ENCODE measurements at regions of chr19 and their contacts with region 1.

Region 1: GRCh38 chr19:12666265-12667048 is at the starts of genes MAN2B1 and WDR83:
- DNase-seq: peak; percentile 83
- H3K4me3 ChIP-seq: peak within 1 kb of the TSS; percentile 62 to 79 (median 76)
- H3K27ac ChIP-seq: peak within 1 kb of the TSS; percentile 73 to 82 (median 78)
- H3K4me1 ChIP-seq: peaks cover 0 to 47% (median 43%) of the 10 kb centered on the region in 4 donors
- H3K27me3 ChIP-seq: no peaks in the 10 kb centered on the region
- CTCF ChIP-seq: no peak
- EP300 ChIP-seq: no peak
- POLR2A ChIP-seq: peak in 1 of 2 donors; percentile 17
- total RNA-seq, gene MAN2B1: 41.1 to 75.6 (median 63.8) TPM
- total RNA-seq, gene WDR83: 7.8 to 11.7 (median 10.0) TPM

Region 2: DNA sequence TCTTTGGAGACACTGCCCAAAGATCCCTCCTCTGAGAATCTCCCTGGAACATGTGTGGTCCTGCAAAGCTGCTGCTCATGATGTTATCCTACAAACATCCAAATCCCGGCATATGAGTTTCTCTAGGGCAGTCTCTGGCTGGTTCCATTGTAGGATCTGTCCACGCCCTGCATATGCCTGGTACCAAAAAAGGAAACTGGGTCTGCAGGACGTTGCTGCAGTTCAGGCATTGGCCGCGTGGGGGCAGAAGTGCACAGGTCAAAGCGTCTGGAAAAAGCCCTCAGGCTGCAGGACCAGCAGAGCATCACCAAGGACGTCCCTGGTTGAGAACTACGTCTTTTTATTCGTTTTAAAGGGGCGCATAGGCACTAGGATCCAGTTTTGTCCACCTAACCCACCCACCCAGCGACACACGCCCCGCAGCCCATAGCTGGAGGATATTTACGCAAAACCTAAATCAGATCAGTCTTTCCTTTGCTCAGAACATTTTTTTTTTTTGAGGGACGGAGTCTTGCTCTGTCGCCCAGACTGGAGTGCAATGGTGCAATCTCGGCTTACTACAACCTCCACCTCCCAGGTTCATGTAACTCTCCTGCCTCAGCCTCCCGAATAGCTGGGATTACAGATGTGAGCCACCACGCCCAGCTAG is 102.3 kb before region 1 on chr19:
- intact Hi-C with region 1: loop called (anchors 5 kb)
- DNase-seq: peak; percentile 93
- H3K4me3 ChIP-seq: peak overlapping the region in 1 of 4 donors; percentile 24
- H3K27ac ChIP-seq: peak overlapping the region; percentile 63 to 72 (median 66)
- H3K4me1 ChIP-seq: peaks cover 0 to 9% (median 4%) of the 10 kb centered on the region in 4 donors
- H3K27me3 ChIP-seq: no peaks in the 10 kb centered on the region
- CTCF ChIP-seq: peak; percentile 78 to 97 (median 92)
- EP300 ChIP-seq: no peak
- POLR2A ChIP-seq: no peak

Region 3: DNA sequence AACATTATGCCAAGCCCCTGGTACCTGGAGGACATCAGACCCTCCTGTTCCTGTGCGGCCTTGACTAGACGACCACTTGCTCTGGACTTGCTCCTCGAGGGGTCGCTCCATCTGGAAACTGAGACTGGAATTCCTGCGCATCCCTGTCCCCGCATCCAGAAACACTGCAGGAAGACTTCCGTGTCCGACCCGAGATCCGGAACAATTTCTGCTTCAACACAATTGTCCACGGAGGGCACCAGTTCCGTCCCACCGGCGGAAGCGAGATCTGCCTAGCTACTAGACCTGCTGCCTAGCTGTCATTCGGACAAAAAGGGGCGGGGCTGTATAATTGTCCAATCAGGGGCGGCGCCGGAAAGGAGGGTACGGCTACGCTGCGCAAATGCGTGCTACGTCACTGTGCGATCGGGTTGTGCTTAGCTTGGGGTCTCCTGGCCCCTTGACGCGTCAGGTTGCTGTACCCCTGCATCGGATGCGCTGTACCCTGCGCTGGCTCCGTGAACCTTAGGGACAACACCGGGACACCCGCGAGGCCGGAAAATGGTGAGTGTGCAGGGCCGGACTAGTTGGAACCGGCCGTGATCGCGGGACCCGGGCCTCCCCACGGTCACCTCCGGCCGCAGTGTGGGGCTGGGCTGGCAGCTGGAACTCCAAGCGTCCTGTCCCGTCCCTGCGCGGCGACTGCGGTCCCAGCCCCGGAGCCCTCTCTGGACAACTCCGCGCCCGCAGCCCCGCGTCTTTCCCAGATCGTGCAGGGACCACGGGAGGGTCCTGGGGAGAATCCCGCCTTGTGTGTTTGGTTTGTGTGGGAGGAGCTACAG is 55.7 kb before region 1 on chr19 and contains the starts of genes ZNF490 and ZNF791:
- intact Hi-C with region 1: loop called (anchors 5 kb)
- DNase-seq: peak; percentile 99
- H3K4me3 ChIP-seq: peak within 1 kb of the TSS; percentile 77 to 99 (median 88)
- H3K27ac ChIP-seq: peak within 1 kb of the TSS; percentile 95 to 100 (median 98)
- H3K4me1 ChIP-seq: peaks cover 0 to 39% (median 33%) of the 10 kb centered on the region in 4 donors
- H3K27me3 ChIP-seq: no peaks in the 10 kb centered on the region
- CTCF ChIP-seq: no peak
- EP300 ChIP-seq: no peak
- POLR2A ChIP-seq: peak; percentile 88 to 93
- total RNA-seq, gene ZNF490: 4.3 to 7.8 (median 5.5) TPM
- total RNA-seq, gene ZNF791: 16.6 to 27.6 (median 22.3) TPM

Region 4: DNA sequence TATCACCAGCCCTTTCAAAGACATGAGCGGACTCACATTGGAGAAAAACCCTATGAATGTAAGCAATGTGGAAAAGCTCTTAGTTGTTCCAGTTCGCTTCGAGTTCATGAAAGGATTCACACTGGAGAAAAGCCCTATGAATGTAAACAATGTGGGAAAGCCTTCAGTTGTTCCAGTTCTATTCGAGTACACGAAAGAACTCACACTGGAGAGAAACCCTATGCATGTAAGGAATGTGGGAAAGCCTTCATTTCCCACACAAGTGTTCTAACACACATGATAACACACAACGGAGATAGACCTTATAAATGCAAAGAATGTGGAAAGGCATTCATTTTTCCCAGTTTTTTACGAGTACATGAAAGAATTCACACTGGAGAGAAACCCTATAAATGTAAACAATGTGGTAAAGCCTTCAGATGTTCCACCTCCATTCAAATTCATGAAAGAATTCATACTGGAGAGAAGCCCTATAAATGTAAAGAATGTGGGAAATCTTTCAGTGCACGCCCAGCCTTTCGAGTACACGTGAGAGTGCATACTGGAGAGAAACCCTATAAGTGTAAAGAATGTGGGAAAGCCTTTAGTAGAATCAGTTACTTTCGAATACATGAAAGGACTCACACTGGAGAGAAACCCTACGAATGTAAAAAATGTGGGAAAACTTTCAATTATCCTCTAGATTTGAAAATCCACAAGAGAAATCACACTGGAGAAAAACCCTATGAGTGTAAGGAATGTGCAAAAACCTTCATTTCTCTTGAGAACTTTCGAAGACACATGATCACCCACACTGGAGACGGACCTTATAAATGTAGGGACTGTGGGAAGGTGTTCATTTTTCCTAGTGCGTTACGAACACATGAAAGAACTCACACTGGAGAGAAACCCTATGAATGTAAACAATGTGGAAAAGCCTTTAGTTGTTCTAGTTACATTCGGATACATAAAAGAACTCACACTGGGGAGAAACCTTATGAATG is 38.1 kb before region 1 on chr19:
- intact Hi-C with region 1: no loop called
- DNase-seq: no peak
- H3K4me3 ChIP-seq: no peak overlapping the region
- H3K27ac ChIP-seq: no peak overlapping the region
- H3K4me1 ChIP-seq: no peaks in the 10 kb centered on the region
- H3K27me3 ChIP-seq: no peaks in the 10 kb centered on the region
- CTCF ChIP-seq: no peak
- EP300 ChIP-seq: no peak
- POLR2A ChIP-seq: no peak

Region 5: GRCh38 chr19:12647490-12648071 is 18.9 kb before region 1 on chr19:
- intact Hi-C with region 1: no loop called
- DNase-seq: peak; percentile 83
- H3K4me3 ChIP-seq: peak overlapping the region; percentile 8 to 46 (median 37)
- H3K27ac ChIP-seq: peak overlapping the region in 2 of 4 donors; percentile 1 to 11
- H3K4me1 ChIP-seq: peaks cover 0 to 17% (median 15%) of the 10 kb centered on the region in 4 donors
- H3K27me3 ChIP-seq: no peaks in the 10 kb centered on the region
- CTCF ChIP-seq: no peak
- EP300 ChIP-seq: no peak
- POLR2A ChIP-seq: no peak

Measured in sigmoid colon (tissue), 7 donors.